Sigmoid colon (tissue), 7 donors: ENCODE measurements at regions of chr17 and their contacts with region 1.

Region 1: GRCh38 chr17:4004517-4005295 is 40.5 kb upstream of the ATP2A3 start:
- DNase-seq: peak; percentile 68
- H3K4me3 ChIP-seq: no peak overlapping the region
- H3K27ac ChIP-seq: peak overlapping the region in 1 of 4 donors; percentile 28
- H3K4me1 ChIP-seq: peaks cover 0 to 20% (median 15%) of the 10 kb centered on the region in 4 donors
- H3K27me3 ChIP-seq: peaks cover 0 to 17% (median 6%) of the 10 kb centered on the region in 3 donors
- CTCF ChIP-seq: peak; percentile 73 to 98 (median 90)
- EP300 ChIP-seq: no peak
- POLR2A ChIP-seq: no peak

Region 2: DNA sequence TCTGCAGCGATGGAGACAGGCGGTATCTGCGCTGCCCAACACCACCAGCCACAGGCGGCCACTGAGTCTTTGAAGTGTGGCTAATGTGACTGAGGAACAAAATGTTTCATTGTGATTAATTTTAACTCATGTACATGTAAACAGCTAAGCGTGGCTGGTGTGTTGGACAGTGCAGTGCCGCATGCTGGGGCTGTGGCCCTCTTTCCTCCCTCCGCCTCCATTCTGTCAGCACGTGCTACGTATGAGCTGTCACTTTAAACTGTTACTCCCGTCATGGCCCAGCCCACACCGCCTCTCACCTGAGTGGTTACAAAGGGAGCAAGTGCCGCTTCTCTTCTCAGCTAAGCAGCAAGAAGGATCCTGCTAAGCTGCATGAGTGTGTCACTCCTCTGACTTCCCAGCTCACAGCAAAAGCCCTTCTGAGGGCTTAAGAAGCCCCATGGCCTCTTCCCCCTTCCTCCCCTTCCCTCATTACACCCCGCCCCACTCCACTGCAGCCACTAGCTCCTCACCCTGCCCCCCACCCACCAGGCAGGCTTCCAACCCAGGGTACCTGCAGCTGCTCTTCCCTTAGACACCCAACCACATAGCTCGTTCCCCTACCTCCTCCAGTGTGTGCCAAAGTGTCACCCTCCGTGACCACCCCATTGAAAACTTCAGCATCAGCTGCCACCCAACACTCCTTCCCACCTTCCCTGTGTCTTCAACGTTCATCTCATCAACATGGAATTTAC is 266.0 kb before region 1 on chr17:
- intact Hi-C with region 1: loop called (anchors 5 kb)
- DNase-seq: no peak
- H3K4me3 ChIP-seq: no peak overlapping the region
- H3K27ac ChIP-seq: peak overlapping the region; percentile 44 to 68 (median 54)
- H3K4me1 ChIP-seq: peaks cover 0 to 17% (median 14%) of the 10 kb centered on the region in 4 donors
- H3K27me3 ChIP-seq: no peaks in the 10 kb centered on the region
- CTCF ChIP-seq: peak in 1 of 4 experiments; percentile 5
- EP300 ChIP-seq: no peak
- POLR2A ChIP-seq: no peak

Region 3: DNA sequence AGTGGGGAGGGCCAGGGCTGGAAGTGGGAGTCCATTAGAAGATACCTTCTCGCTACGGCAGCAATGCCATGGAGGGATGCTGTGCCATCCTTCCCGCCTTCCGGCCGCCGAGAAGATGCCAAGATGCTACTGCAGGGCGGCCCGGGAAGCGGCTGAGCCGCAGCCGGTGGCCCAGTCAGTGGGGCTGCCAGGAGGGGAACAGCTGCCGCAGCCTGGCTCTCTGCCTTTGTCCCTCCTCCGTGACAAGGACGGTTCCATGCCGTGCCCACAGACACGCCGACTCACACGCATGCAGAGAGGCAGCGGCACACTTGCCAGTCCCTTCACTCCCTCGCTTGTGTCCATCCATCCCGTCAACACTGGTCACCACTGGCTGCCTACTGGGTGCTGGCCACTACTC is 138.4 kb before region 1 on chr17:
- intact Hi-C with region 1: loop called (anchors 2 kb)
- DNase-seq: no peak
- H3K4me3 ChIP-seq: no peak overlapping the region
- H3K27ac ChIP-seq: no peak overlapping the region
- H3K4me1 ChIP-seq: peaks cover 0 to 10% (median 7%) of the 10 kb centered on the region in 4 donors
- H3K27me3 ChIP-seq: no peaks in the 10 kb centered on the region
- CTCF ChIP-seq: no peak
- EP300 ChIP-seq: no peak
- POLR2A ChIP-seq: no peak

Region 4: GRCh38 chr17:3913531-3914311 is 91.0 kb before region 1 on chr17:
- intact Hi-C with region 1: loop called (anchors 1 kb)
- DNase-seq: peak; percentile 88
- H3K4me3 ChIP-seq: peak overlapping the region in 2 of 4 donors; percentile 35 to 37
- H3K27ac ChIP-seq: peak overlapping the region; percentile 45 to 75 (median 60)
- H3K4me1 ChIP-seq: peaks cover 0 to 21% (median 9%) of the 10 kb centered on the region in 4 donors
- H3K27me3 ChIP-seq: no peaks in the 10 kb centered on the region
- CTCF ChIP-seq: peak; percentile 86 to 98 (median 96)
- EP300 ChIP-seq: no peak
- POLR2A ChIP-seq: no peak

Region 5: DNA sequence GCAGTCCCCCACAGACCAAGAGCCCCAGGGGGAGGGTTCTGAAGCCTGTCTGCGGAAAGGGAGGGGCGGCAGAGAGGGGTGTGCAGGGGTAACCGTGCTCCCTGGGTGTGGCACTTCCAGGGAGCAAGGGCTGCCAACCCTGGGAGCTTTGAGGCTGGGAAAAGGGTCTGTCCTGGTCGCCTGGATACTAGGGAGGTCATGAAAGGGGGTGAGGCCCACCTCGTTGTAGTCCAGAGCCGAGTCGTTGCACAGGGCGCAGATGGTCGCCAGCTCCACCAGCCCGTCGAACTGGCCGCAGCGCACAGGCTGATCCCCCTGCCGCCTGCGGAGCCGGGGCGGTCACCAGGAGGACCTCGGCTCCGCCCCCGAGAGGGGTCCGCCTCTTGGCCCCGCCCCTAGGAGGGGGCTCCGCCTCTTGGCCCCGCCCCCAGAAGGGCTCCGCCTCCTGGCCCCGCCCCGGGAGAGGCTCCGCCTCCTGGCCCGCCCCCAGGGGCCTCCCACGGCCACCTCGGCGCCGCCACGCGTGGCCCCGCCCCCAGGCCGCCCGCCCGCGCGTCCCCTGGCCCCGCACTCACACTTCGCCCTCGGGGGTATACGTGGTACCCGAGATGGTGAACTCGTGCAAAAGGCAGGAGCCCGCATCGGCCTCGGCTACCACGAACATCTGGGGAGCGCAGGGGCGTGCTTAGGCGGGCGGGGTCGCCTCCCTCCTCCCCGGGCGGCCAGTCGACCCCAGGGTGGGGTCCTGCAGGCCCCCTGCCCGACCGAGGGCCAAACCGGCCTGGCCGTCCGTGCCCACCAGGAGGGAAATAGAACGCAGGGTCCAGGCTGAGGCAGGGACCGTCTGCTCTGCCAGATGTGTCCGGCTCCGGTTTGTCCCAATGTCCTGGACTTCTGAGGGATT is 60.0 kb before region 1 on chr17:
- intact Hi-C with region 1: no loop called
- DNase-seq: peak; percentile 86
- H3K4me3 ChIP-seq: peak overlapping the region; percentile 31 to 57 (median 48)
- H3K27ac ChIP-seq: peak overlapping the region; percentile 33 to 62 (median 48)
- H3K4me1 ChIP-seq: peaks cover 0 to 18% (median 16%) of the 10 kb centered on the region in 4 donors
- H3K27me3 ChIP-seq: no peaks in the 10 kb centered on the region
- CTCF ChIP-seq: no peak
- EP300 ChIP-seq: no peak
- POLR2A ChIP-seq: no peak